Right cardiac atrium (tissue), 5 donors: ENCODE measurements at regions of chr2 and their contacts with region 1.

Region 1: DNA sequence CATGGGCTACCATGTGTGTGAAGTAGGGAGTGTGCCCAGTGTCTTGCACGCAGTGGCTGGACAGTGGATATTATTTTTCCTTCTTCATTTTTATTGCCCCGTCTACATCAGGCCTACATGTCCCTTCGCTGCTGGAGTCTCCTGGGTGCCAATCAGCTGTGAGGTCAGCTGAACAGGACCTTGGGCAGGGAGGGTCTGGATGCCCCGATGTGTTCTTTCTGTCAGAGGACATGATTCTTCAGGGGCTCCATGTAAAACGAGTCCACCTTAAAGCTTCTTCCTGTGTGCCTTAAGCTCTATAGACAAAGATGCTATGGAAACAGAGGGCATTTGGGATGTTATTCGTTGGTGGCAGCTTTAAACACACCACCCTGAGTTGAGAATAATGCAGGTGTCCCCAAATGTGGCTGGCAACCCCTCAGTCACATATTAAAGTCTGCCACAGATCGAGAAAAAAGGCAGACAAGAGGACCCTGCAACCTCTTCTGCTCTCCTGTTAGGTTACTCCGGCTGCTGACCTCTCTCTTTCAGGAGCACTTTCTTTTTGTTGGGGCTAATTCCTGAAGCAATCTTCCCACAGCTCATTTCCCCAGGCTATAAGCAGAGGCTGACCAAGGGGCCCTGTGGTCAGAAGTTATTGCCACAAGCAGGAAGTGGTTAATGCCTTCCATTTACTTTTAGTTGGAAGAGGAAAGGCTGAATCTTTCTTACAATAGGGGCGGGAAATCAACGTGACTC is 20.0 kb downstream of the GREB1 start:
- DNase-seq: no peak
- ATAC-seq: no peak
- H3K4me3 ChIP-seq: no peak overlapping the region
- H3K27ac ChIP-seq: no peak overlapping the region
- H3K4me1 ChIP-seq: peaks cover 1% of the 10 kb centered on the region
- H3K27me3 ChIP-seq: no peaks in the 10 kb centered on the region

Region 2: GRCh38 chr2:11500702-11501303 is 53.0 kb before region 1 on chr2:
- intact Hi-C with region 1: loop called in 1 of 4 experiments (anchors 5 kb)
- DNase-seq: no peak
- ATAC-seq: no peak
- H3K4me3 ChIP-seq: no peak overlapping the region
- H3K27ac ChIP-seq: no peak overlapping the region
- H3K4me1 ChIP-seq: no peaks in the 10 kb centered on the region
- H3K27me3 ChIP-seq: no peaks in the 10 kb centered on the region